ENCODE measurements at regions of chr4 and their contacts with region 1.

Region 1: DNA sequence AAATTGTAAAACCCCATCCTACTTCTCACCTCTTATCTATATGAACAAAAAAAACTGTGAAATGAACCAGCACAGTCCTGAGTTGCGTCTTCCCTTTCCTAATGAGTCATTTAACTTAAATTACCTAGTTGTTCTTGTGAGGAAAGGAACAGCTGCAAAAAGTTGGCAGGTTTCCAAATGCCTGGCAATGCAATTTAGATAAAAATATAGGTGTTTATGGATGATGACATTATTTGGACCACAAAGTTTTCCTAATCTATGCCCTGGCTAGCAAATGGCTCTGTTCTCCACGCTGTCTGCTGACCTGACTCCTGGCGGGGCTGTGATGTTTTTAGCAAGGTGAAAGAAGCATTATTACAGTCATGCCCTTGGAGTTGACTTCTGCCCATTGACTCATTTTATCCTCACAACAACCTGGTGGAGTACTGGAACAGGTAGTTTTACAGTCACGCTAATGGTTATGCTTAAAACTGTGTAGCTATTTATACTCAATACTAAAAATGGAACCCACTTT is 29.8 kb upstream of the RELL1 start:
- DNase-seq: peak; percentile 83 to 89
- ATAC-seq: peak; percentile 97 to 98
- H3K4me3 ChIP-seq: no peak overlapping the region
- H3K27ac ChIP-seq: peak overlapping the region; percentile 68 to 83 (median 80)
- H3K4me1 ChIP-seq: peaks cover 10 to 13% of the 10 kb centered on the region in 2 donors
- H3K27me3 ChIP-seq: no peaks in the 10 kb centered on the region
- CTCF ChIP-seq: no peak
- POLR2A ChIP-seq: peak in 1 of 2 donors; percentile 29

Region 2: DNA sequence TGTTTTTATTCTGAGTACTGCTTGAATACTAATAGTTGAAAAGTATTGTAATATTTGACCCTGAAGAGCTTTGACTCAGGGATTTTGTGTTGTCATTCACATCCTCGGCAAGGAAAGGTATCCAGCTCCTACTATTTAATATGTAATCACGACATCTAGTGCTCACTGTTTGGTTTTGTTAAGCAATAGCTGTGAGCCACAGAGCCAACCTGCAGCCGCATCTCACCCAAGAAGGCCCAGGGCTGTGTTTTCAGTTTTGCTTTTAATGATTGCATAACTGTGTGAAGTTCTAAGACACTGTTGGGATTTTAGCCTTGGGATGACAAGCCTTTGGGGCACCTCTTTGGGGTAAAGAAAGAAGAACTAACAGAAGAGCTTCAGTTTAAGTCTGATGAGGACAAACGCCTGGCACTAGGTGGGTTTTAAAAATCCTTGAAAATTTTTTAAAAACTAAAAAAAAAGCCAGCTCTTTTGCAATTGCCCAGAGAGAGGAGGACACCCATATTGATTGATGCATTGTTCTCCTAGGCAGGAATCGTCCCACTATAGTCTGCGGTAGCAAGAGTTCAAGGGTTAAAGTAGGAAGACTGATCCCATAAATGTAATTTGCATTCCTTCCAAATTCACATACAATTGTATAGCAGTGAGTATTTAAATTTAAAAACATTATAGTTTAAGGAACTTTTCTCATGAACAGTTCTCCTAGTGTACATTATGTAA is 187.6 kb before region 1 on chr4:
- in situ Hi-C with region 1: no loop called
- intact Hi-C with region 1: no loop called
- DNase-seq: no peak
- ATAC-seq: no peak
- H3K4me3 ChIP-seq: no peak overlapping the region
- H3K27ac ChIP-seq: no peak overlapping the region
- H3K4me1 ChIP-seq: no peaks in the 10 kb centered on the region
- H3K27me3 ChIP-seq: no peaks in the 10 kb centered on the region
- CTCF ChIP-seq: no peak
- POLR2A ChIP-seq: no peak

Region 3: GRCh38 chr4:37936889-37937498 is 221.0 kb after region 1 on chr4:
- in situ Hi-C with region 1: no loop called
- intact Hi-C with region 1: loop called (anchors 2 kb)
- DNase-seq: peak; percentile 91 to 96
- ATAC-seq: peak; percentile 78 to 79
- H3K4me3 ChIP-seq: peak overlapping the region; percentile 18 to 28 (median 24)
- H3K27ac ChIP-seq: peak overlapping the region; percentile 83 to 97 (median 88)
- H3K4me1 ChIP-seq: peaks cover 50 to 58% of the 10 kb centered on the region in 2 donors
- H3K27me3 ChIP-seq: no peaks in the 10 kb centered on the region
- CTCF ChIP-seq: no peak
- POLR2A ChIP-seq: peak; percentile 53 to 76